Endothelial cell of umbilical vein (primary cell): ENCODE measurements at regions of chr6 and their contacts with region 1.

Region 1: DNA sequence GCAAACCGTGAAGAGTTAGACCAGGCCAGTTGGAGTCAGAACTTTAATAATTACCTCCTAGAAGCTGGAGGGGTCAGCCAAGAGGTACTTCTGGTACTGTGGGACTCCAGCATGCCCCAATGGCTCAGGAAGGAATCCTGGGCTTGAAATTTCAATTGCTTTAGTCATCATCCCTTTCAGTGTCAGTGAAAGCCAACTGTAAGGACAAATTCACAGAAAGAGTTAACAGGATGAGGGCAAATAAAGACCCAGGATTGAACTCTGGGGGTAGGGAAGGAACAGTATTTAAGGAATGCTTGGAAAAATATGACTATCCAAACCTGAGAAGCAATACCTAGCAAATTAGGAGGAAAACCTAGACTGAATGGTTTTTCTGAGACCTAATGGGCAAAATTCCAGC is 735.1 kb upstream of the MARCKS start:
- DNase-seq: peak; percentile 97
- H3K4me3 ChIP-seq: no peak overlapping the region
- H3K27ac ChIP-seq: peak overlapping the region; percentile 89
- H3K4me1 ChIP-seq: peaks cover 40% of the 10 kb centered on the region
- H3K27me3 ChIP-seq: no peaks in the 10 kb centered on the region
- CTCF ChIP-seq: peak; percentile 44
- POLR2A ChIP-seq: peak; percentile 17

Region 2: GRCh38 chr6:112337209-112337638 is 784.8 kb before region 1 on chr6:
- CTCF ChIA-PET with region 1: no interaction called
- POLR2A ChIA-PET with region 1: no interaction called
- dilution Hi-C with region 1: no loop called
- intact Hi-C with region 1: loop called (anchors 10 kb)
- DNase-seq: peak; percentile 89
- H3K4me3 ChIP-seq: no peak overlapping the region
- H3K27ac ChIP-seq: no peak overlapping the region
- H3K4me1 ChIP-seq: peaks cover 8% of the 10 kb centered on the region
- H3K27me3 ChIP-seq: no peaks in the 10 kb centered on the region
- CTCF ChIP-seq: peak; percentile 75 to 85
- POLR2A ChIP-seq: peak; percentile 62

Region 3: GRCh38 chr6:113018351-113019151 is 103.5 kb before region 1 on chr6:
- CTCF ChIA-PET with region 1: no interaction called
- POLR2A ChIA-PET with region 1: no interaction called
- dilution Hi-C with region 1: no loop called
- intact Hi-C with region 1: loop called (anchors 1 kb)
- DNase-seq: peak; percentile 96
- H3K4me3 ChIP-seq: peak overlapping the region in 1 of 3 experiments; percentile 5
- H3K27ac ChIP-seq: peak overlapping the region; percentile 96
- H3K4me1 ChIP-seq: peaks cover 24% of the 10 kb centered on the region
- H3K27me3 ChIP-seq: no peaks in the 10 kb centered on the region
- CTCF ChIP-seq: no peak
- POLR2A ChIP-seq: no peak

Region 4: GRCh38 chr6:113182370-113183141 is 60.5 kb after region 1 on chr6:
- CTCF ChIA-PET with region 1: interaction called, 8 read pairs
- POLR2A ChIA-PET with region 1: no interaction called
- dilution Hi-C with region 1: no loop called
- intact Hi-C with region 1: loop called (anchors 1 kb)
- DNase-seq: peak; percentile 82
- H3K4me3 ChIP-seq: peak overlapping the region in 1 of 3 experiments; percentile 38
- H3K27ac ChIP-seq: peak overlapping the region; percentile 87
- H3K4me1 ChIP-seq: peaks cover 29% of the 10 kb centered on the region
- H3K27me3 ChIP-seq: no peaks in the 10 kb centered on the region
- CTCF ChIP-seq: no peak
- POLR2A ChIP-seq: no peak

Region 5: GRCh38 chr6:113352029-113352801 is 230.2 kb after region 1 on chr6:
- CTCF ChIA-PET with region 1: interaction called, 3 read pairs
- POLR2A ChIA-PET with region 1: no interaction called
- dilution Hi-C with region 1: no loop called
- intact Hi-C with region 1: loop called (anchors 1 kb)
- DNase-seq: peak; percentile 62
- H3K4me3 ChIP-seq: no peak overlapping the region
- H3K27ac ChIP-seq: peak overlapping the region; percentile 80
- H3K4me1 ChIP-seq: peaks cover 40% of the 10 kb centered on the region
- H3K27me3 ChIP-seq: no peaks in the 10 kb centered on the region
- CTCF ChIP-seq: no peak
- POLR2A ChIP-seq: no peak

Region 6: DNA sequence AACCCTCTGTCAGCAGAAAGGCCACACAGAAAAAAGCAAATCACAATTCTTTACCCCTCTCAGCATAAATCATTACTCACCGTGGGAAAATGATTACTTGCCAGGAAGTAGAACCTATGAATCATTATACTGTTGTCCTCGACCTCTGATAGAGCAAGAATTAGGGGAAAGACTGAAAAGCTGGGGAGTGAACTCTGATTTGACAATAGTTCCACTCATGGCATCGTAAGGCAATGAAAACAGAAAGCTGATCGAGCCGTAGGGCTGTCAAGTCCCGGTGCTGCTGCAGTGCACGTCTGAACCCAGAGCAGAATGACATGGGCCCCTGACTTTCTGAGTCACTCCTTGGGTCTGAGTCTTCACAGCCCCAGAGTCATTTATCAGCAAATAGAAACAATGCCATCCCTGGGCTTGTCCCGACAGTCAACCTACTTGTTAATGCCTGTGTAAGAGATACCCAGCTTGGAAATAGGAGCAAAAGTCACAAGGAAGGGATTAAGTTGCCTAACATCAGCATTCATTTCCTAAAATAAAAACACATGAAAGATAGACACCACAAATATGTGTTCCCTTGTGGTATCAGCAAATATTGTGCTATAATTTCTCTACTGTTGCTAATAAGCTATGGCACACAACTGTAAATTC is 510.3 kb after region 1 on chr6:
- CTCF ChIA-PET with region 1: interaction called, 3 read pairs
- POLR2A ChIA-PET with region 1: no interaction called
- dilution Hi-C with region 1: no loop called
- intact Hi-C with region 1: loop called (anchors 5 kb)
- DNase-seq: peak; percentile 99
- H3K4me3 ChIP-seq: peak overlapping the region in 2 of 3 experiments; percentile 6 to 33
- H3K27ac ChIP-seq: peak overlapping the region; percentile 83
- H3K4me1 ChIP-seq: peaks cover 22% of the 10 kb centered on the region
- H3K27me3 ChIP-seq: no peaks in the 10 kb centered on the region
- CTCF ChIP-seq: no peak
- POLR2A ChIP-seq: no peak

Region 7: DNA sequence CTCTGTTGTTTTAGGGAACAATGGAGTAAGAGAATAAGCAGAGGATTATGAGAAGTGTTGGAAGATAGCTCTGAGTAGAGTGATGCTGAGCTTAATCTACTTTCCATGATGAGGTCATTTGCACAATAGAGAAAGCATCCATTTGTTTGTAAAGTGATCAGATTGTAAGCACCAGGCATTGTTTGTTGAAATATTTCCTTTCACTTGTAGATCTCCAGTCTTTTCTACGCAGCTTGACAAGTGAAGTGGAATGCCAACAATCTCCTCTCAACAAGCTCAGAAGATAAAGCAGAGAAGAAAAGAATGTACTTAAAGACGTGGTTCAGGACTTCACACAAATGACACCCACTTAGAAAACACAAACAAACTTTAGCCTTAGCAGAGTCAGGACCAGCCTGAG is 654.9 kb after region 1 on chr6:
- CTCF ChIA-PET with region 1: no interaction called
- POLR2A ChIA-PET with region 1: no interaction called
- dilution Hi-C with region 1: no loop called
- intact Hi-C with region 1: no loop called
- DNase-seq: no peak
- H3K4me3 ChIP-seq: no peak overlapping the region
- H3K27ac ChIP-seq: no peak overlapping the region
- H3K4me1 ChIP-seq: peaks cover 4% of the 10 kb centered on the region
- H3K27me3 ChIP-seq: no peaks in the 10 kb centered on the region
- CTCF ChIP-seq: no peak
- POLR2A ChIP-seq: no peak